IMR-90 (cell line): ENCODE measurements at regions of chr18 and their contacts with region 1.

Region 1: DNA sequence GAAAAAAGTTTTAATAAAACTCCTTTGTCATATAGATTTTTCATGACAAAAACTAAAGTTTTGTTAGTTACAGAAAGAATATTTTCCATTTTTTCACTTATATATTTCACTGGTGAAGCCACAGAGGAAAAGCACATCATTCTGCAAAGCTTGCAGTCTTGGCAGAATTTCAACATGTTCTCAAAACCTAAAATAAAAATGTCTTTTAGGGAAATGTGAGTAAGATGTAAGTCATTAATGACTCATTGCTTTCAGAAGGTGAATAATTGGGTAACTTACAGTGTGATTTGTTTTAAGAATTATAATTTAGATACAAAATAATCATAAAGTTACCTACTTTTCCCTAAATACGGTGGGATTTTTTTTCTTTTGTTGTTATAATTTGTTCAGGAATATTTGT is 43.4 kb upstream of the TNFRSF11A start:
- DNase-seq: peak; percentile 88
- ATAC-seq: peak; percentile 67
- H3K4me3 ChIP-seq: no peak overlapping the region
- H3K27ac ChIP-seq: no peak overlapping the region
- H3K4me1 ChIP-seq: peaks cover 7% of the 10 kb centered on the region
- H3K27me3 ChIP-seq: no peaks in the 10 kb centered on the region
- CTCF ChIP-seq: no peak
- POLR2A ChIP-seq: no peak
- RAD21 ChIP-seq: no peak

Region 2: GRCh38 chr18:62499263-62499650 is 217.6 kb after region 1 on chr18:
- CTCF ChIA-PET with region 1: no interaction called
- POLR2A ChIA-PET with region 1: no interaction called
- dilution Hi-C with region 1: no loop called
- in situ Hi-C with region 1: no loop called
- intact Hi-C with region 1: no loop called
- DNase-seq: no peak
- ATAC-seq: no peak
- H3K4me3 ChIP-seq: no peak overlapping the region
- H3K27ac ChIP-seq: no peak overlapping the region
- H3K4me1 ChIP-seq: no peaks in the 10 kb centered on the region
- H3K27me3 ChIP-seq: peaks cover 6% of the 10 kb centered on the region
- CTCF ChIP-seq: no peak
- POLR2A ChIP-seq: no peak
- RAD21 ChIP-seq: no peak

Region 3: GRCh38 chr18:62566199-62566598 is 284.5 kb after region 1 on chr18:
- CTCF ChIA-PET with region 1: no interaction called
- POLR2A ChIA-PET with region 1: no interaction called
- dilution Hi-C with region 1: no loop called
- in situ Hi-C with region 1: loop called (anchors 25 kb)
- intact Hi-C with region 1: no loop called
- DNase-seq: peak; percentile 7
- ATAC-seq: no peak
- H3K4me3 ChIP-seq: no peak overlapping the region
- H3K27ac ChIP-seq: no peak overlapping the region
- H3K4me1 ChIP-seq: 0 out of 2 replicates have a peak, but pooled peaks cover 2% of the 10 kb centered on the region
- H3K27me3 ChIP-seq: no peaks in the 10 kb centered on the region
- CTCF ChIP-seq: no peak
- POLR2A ChIP-seq: no peak
- RAD21 ChIP-seq: no peak